RWPE1 (cell line): ENCODE measurements at regions of chr10 and their contacts with region 1.

Region 1: GRCh38 chr10:73879296-73880173 is 5.2 kb upstream of the CAMK2G start:
- DNase-seq: peak; percentile 74
- H3K27ac ChIP-seq: no peak overlapping the region
- CTCF ChIP-seq: peak; percentile 85

Region 2: DNA sequence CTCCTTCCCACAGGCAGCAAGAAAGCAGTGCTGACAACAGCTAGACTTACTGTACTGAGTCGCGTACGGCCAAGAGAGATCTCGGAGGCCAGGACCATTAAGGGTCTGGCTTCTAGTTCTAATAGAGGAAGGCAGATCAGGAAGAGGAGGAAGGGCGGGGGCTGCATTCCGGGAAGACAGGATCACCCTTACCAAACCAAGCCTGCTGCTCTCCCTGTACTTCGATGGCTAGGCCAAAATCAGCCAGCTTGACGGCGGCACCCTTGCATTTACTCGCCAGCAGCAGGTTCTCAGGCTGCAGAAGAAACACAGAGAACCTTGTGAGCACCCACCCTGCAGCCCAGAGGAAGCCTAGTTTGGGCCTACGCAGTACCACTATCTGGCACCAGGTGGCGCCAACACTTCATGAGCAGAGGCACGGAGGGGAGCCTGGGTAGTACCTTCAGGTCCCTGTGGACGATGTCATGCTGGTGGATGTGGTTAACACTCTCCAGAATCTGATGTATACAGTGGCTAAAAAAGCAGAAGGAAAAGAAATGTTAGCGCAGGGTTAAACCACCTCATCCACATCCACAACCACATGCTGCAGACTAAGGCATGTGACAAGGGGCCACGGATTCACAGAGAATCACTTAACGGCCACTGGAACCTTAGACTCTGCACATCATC is 30.6 kb before region 1 on chr10:
- CTCF ChIA-PET with region 1: interaction called, 28 read pairs
- POLR2A ChIA-PET with region 1: interaction called, 3 read pairs
- DNase-seq: peak; percentile 90
- H3K27ac ChIP-seq: peak overlapping the region; percentile 11
- CTCF ChIP-seq: peak; percentile 98

Region 3: GRCh38 chr10:73859428-73859783 is 20.1 kb before region 1 on chr10:
- CTCF ChIA-PET with region 1: interaction called, 25 read pairs
- POLR2A ChIA-PET with region 1: no interaction called
- DNase-seq: no peak
- H3K27ac ChIP-seq: peak overlapping the region; percentile 8
- CTCF ChIP-seq: no peak

Region 4: DNA sequence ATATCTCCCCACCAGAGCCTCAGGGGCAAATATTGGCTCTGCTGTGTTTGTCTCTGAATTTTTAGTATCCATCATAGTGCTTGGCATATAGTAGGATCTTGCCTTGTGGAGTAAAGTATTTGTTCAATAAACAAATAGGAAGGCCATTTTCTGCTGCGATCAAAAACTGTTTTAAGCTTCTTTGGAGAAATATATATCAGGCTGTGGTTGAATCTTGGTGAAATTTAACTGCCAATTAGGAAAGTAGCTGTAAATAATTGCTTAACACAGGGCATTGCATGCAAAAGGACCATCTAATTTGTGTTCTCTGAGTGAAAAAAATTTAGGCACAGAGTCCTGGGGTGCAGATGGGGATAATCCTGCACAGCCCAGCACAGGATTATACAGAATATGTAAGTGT is 133.5 kb after region 1 on chr10:
- CTCF ChIA-PET with region 1: interaction called, 10 read pairs
- POLR2A ChIA-PET with region 1: no interaction called
- DNase-seq: no peak
- H3K27ac ChIP-seq: no peak overlapping the region
- CTCF ChIP-seq: no peak